ENCODE measurements at regions of chr12 and their contacts with region 1.

Region 1: DNA sequence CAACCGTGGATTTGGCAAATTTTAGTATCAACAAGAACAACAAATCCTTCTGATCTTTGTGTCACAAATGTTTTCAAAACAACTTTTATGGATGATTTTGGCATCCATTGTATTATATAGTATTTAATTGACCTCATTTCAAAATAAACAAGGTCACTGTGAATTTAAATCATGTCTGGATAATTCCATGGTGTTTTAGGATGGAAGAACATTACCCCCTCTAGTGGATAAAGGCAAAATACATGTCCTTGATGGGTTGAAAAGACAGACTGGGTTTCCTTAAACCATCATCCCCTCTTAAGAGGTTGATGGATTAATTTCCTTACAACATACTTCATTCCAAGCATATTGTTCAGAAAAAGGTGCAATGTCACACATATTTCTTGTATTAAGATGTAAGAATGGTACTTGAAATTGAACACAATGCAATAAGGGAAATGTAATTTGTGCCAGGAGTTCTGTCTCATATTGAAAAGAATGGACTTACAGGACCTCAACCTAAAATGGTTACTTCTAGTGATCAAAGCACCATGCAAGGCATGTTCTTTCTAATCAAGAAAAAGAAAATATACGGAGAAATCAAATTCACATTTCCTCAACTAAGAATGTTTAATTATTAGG is 352.0 kb downstream of the BCAT1 start:
- DNase-seq: no peak
- H3K4me3 ChIP-seq: no peak overlapping the region
- H3K27ac ChIP-seq: no peak overlapping the region
- H3K4me1 ChIP-seq: no peaks in the 10 kb centered on the region
- H3K27me3 ChIP-seq: no peaks in the 10 kb centered on the region
- CTCF ChIP-seq: peak; percentile 42 to 66 (median 58)
- POLR2A ChIP-seq: no peak

Region 2: GRCh38 chr12:23204933-23205778 is 1391.7 kb before region 1 on chr12:
- intact Hi-C with region 1: loop called (anchors 10 kb)
- DNase-seq: no peak
- H3K4me3 ChIP-seq: no peak overlapping the region
- H3K27ac ChIP-seq: no peak overlapping the region
- H3K4me1 ChIP-seq: no peaks in the 10 kb centered on the region
- H3K27me3 ChIP-seq: no peaks in the 10 kb centered on the region
- CTCF ChIP-seq: peak; percentile 74 to 95 (median 86)
- POLR2A ChIP-seq: no peak

Region 3: GRCh38 chr12:24950231-24950834 is 353.5 kb after region 1 on chr12:
- intact Hi-C with region 1: no loop called
- DNase-seq: no peak
- H3K4me3 ChIP-seq: no peak overlapping the region
- H3K27ac ChIP-seq: no peak overlapping the region
- H3K4me1 ChIP-seq: no peaks in the 10 kb centered on the region
- H3K27me3 ChIP-seq: no peaks in the 10 kb centered on the region
- CTCF ChIP-seq: no peak
- POLR2A ChIP-seq: no peak

Measured in prostate gland (tissue), 2 donors.